AG04450 (cell line): ENCODE measurements at regions of chr11 and their contacts with region 1.

Region 1: GRCh38 chr11:58923300-58923788 is 15.9 kb upstream of the GLYATL1 start:
- DNase-seq: no peak
- H3K4me3 ChIP-seq: peak overlapping the region; percentile 18
- H3K27ac ChIP-seq: no peak overlapping the region
- H3K27me3 ChIP-seq: no peaks in the 10 kb centered on the region
- CTCF ChIP-seq: peak; percentile 51

Region 2: GRCh38 chr11:58900479-58901420 is 22.6 kb before region 1 on chr11:
- CTCF ChIA-PET with region 1: interaction called, 20 read pairs
- POLR2A ChIA-PET with region 1: interaction called, 4 read pairs
- DNase-seq: peak; percentile 61
- H3K4me3 ChIP-seq: peak overlapping the region; percentile 44
- H3K27ac ChIP-seq: no peak overlapping the region
- H3K27me3 ChIP-seq: no peaks in the 10 kb centered on the region
- CTCF ChIP-seq: peak; percentile 75

Region 3: DNA sequence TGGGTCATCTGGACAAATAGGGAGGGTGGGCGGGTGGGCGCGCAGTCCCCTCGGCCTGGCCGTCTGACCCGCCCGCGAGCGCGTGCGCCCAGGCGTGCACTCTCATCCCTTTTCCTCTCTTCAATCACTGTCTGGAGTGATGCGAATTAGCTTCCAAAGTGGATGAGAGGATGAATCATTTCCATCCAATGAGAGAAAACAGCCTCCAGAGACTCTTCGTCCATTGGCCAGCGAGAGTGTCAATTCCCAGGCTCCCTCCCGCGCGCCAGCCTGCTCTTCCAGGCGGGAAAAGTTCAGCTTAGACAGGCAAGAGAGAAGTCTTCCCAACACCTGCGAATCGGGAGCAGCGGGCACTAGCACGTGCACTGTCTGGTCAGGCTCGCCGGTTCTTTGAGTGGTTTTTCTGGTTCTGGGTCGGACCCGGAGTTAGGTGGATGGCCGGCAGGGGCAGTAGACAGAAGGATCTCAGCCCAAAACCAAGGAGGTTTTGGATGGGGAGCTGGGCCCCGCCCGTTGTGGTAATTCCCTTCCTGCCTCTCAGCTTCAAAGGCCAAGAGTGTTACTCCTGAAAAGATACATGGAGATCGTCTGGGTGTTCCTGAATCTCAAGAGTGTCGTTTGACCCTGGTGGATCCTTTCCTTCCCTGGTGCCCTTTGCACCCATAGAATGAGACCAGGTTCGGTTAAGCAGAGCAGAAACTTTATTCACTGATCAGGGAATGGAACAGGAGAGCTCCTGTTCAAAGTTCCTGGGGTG is 17.4 kb before region 1 on chr11:
- CTCF ChIA-PET with region 1: interaction called, 20 read pairs
- POLR2A ChIA-PET with region 1: interaction called, 4 read pairs
- DNase-seq: peak; percentile 71
- H3K4me3 ChIP-seq: peak overlapping the region; percentile 75
- H3K27ac ChIP-seq: peak overlapping the region; percentile 65
- H3K27me3 ChIP-seq: no peaks in the 10 kb centered on the region
- CTCF ChIP-seq: peak; percentile 72